Posterior vena cava (tissue), 2 donors: ENCODE measurements at regions of chr17 and their contacts with region 1.

Region 1: GRCh38 chr17:72030067-72030899 is 90.5 kb upstream of the SOX9 start:
- DNase-seq: no peak

Region 2: DNA sequence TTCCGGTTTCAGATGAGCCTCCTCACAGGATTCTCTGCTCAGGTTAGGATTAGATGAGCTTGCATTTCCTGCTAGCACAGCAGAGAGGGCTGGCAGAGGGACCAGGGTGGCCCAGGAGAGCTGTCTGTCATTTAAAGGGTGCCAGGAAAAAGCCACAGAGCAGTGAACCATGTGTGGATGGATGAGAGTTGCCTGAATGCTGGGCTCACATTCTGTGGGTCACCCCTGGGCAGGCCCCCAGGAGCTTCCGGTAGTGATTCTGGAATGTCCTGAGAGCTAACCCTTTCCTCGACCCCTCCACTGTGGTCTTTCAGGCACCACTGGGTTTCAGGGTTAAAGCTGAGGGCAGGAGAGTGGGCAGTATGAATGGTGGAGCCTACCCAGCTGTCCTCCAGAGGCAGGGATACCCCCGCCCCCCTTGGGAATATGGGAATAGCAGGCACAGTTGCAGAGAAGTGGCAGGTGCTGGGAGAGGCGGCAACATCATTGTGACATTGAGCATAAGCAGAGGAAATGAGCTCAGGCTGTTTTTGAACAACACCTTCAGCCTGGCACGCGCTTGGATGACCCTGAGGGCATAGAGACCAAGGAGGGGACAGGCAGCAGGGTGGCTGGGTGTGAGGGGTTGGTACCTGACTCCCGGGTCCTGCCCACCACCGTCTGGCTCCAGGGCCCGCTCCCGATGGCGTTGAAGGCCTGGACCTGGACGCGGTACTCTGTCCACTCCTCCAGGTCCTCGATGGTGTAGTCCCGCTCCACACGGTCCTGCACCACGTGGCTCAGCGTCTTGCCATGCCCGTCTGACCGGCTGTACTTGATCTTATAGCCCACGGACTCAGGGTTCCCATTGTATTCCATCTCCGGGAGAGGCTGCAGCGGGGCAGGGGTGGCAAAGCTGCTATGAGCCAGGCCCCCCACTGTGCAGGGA is 1364.5 kb after region 1 on chr17:
- intact Hi-C with region 1: loop called in 1 of 2 experiments (anchors 5 kb)
- DNase-seq: peak; percentile 76